Activated naive CD4-positive, alpha-beta T cell treated with anti-CD3 and anti-CD28 coated beads, Interleukin-2, amount 10 ng/mL, durations not matched to agents 7 days and 5 days (primary cell): ENCODE measurements at regions of chr12 and their contacts with region 1.

Region 1: DNA sequence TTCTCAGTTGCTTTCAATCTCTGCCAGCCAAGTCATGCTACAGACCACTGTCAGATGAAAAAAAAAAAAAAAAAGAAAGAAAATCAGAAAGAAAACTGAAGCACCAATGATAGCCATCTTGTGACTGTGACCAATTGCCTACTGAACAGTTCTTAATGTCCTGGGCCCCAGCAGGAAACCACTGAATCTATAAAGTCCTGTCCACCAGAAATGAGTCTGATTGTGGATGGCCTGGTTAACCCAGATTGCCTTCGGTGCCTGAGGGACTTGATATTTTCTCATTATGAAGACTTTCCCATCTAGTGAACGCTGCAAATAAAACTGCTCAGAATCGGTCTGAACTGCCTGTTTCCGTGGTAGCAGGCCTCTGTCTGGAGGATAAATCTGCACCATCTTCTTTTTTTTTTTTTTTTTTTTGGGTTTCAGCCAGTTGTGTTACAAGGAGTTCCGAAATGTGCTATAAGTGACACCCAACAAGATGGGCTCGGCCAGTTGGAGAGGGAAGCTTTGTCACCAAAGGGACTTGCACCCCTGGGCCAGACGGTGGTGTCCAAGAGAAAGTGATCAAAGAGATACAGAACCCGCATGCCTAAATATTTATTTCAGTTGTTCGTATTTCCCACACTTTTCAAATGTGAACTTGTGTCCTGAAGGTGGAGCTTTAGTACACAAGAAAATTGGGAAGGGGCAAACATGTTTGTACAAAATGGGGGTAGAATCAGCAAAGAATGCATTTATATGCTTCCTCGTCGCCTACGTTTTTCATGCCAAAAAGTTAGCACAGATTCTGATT is 3.0 kb upstream of the PLXNC1 start:
- DNase-seq: no peak
- H3K4me3 Mint-ChIP-seq: no peak overlapping the region
- H3K27ac Mint-ChIP-seq: no peak overlapping the region
- H3K4me1 Mint-ChIP-seq: peaks cover 8% of the 10 kb centered on the region
- H3K27me3 Mint-ChIP-seq: peaks cover 52% of the 10 kb centered on the region

Region 2: GRCh38 chr12:94297876-94298505 is 152.6 kb after region 1 on chr12:
- CTCF ChIA-PET with region 1: no interaction called
- DNase-seq: no peak
- H3K4me3 Mint-ChIP-seq: no peak overlapping the region
- H3K27ac Mint-ChIP-seq: no peak overlapping the region
- H3K4me1 Mint-ChIP-seq: peaks cover 13% of the 10 kb centered on the region
- H3K27me3 Mint-ChIP-seq: no peaks in the 10 kb centered on the region

Region 3: DNA sequence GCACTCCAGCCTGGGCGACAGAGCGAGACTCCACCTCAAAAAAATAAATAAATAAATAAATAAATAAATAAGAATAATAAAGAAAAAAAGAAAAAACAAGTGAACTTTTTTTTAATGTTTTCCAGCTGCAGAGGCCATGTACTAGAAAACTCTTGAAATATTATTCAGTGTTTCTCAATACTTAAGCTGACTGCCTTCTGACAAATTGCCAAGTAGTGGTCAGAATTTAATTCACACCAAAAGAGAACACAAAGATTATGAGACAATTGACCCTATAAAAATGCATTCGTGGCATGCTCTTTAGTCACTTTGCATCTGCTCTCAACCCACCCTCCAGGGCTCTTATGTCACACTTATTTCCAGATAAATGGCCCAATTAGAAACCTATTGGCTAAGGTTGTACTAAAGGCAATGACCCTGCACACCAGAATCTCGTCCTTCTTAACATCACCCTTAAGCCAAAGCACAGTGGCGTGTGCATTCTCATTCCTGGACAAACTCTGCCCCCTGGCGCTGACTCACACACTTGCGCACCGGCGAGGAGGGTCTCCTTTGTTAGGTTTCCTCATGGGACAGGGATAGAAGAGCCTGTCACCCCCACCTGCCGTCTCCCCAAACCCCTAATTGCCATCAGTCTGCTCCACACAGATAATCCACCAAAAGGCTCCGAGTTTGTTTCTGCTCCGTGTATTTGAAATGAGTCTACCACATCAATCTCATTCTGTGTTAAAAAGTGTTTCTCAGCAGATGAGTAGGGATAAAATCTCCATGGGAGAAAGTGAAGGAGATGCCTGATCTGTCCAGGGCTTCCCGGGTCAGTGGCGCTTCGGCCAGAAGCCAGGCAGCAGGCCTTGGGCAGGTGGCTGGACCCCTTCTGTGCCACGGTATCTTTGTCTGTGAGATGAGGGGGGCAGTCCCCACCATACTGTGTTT is 387.4 kb after region 1 on chr12:
- CTCF ChIA-PET with region 1: interaction called, 14 read pairs
- DNase-seq: peak; percentile 82
- H3K4me3 Mint-ChIP-seq: no peak overlapping the region
- H3K27ac Mint-ChIP-seq: no peak overlapping the region
- H3K4me1 Mint-ChIP-seq: peaks cover 36% of the 10 kb centered on the region
- H3K27me3 Mint-ChIP-seq: peaks cover 17% of the 10 kb centered on the region